Psoas muscle (tissue), 8 donors: ENCODE measurements at regions of chr18 and their contacts with region 1.

Region 1: DNA sequence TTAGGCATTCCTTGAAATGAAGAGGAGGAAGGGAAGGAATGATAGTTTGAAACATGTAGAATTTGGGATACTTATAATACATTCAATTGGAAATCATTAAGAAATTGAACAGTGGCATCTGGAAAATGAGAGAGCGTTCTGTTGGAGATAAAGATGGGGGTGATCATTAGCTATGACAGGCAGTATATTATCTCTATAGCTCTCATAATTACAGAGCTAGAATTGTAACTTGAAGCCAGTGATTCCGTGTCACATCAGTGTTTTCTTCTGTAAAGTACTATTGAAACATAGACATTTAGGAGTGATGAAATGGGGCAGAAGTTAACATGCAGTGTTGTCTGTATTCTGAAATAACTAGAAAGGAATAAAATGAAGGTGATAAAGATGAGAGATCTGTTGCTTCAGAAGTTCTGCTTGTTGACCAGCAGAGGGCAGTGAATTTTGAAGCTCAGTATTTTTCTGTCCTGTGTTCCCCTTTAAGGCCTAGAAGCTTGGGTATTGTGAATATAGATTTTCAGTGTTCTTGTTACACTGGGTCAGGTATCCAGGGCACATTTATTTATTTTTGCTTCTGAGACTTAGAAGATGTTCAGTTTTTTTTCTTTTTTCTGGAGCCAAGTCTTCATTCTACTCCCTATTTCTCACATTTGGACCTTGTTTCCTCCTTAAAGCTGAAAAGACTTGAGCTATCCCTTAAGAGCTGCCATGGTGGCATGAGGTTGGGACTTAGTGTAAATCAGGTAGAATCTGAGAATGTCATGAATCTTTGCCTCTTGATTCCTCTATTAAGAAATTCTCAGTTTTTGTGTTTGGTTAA is 157.4 kb downstream of the TAF4B start:
- DNase-seq: no peak
- ATAC-seq: peak in 2 of 4 donors; percentile 64 to 75
- H3K4me3 ChIP-seq: no peak overlapping the region
- H3K27ac ChIP-seq: no peak overlapping the region
- H3K4me1 ChIP-seq: no peaks in the 10 kb centered on the region
- H3K27me3 ChIP-seq: no peaks in the 10 kb centered on the region
- CTCF ChIP-seq: peak; percentile 83

Region 2: DNA sequence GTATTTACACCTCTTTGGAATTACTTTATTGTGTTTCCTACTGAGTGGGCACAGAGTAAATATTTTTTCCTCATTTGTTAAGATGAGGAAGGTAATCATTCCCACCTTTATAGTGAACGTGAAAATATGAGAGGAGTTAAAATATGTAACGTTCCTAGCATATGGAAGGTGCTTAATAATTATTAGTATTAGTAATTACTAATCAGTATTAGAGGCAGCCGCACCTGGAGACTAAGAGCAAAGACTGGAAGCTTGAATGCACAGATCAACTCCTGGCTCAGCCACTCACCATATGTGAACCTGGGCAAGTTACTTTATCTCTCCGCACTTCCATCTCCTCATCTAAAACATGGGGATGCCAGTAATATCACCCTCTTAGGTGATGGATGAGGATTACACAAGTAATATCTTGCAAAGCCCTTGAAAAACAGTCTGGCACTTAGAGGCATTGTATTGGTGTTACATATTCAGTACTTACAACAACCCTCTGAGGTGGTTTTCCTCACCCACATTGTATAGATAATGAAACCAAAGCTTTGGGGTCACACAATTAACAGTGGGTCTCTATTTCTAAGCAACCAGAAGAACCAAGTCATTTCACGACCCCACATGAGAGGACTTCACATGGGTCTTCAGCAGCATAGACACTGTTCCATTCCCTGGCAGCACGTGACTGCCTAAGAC is 265.0 kb after region 1 on chr18:
- intact Hi-C with region 1: loop called (anchors 5 kb)
- DNase-seq: no peak
- ATAC-seq: no peak
- H3K4me3 ChIP-seq: no peak overlapping the region
- H3K27ac ChIP-seq: no peak overlapping the region
- H3K4me1 ChIP-seq: no peaks in the 10 kb centered on the region
- H3K27me3 ChIP-seq: peaks cover 0 to 33% (median 0%) of the 10 kb centered on the region in 3 donors
- CTCF ChIP-seq: no peak

Region 3: DNA sequence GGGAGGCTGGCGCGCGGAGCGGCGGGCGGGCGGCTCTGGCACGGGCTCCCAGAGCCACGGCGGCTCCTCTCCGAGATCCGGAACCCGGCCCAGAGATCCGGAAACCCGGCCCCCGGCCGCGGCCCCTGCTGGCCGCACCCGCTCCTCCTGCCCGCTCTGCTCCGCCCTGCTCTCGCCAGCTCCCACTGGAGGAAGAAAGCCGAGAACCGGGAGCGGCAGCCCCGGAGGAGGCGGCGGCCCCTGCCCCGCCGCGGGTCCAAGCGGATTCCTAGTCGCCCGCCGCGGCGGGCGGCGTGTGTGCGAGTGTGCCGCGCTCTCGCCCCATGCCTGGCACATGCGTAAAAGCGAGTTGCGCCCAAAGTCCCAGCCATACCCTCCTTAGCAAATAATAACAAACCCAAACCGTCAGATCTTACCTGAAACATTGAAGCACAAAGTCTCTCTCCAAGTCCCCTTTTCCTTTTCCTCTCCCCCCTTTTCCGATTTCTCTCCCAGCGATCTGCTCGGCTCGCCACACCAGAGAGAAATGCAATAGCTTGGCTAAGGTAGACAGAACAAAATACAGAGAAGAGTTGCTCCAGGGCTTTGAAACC is 273.4 kb after region 1 on chr18:
- intact Hi-C with region 1: loop called in 1 of 2 experiments (anchors 5 kb)
- DNase-seq: peak; percentile 75 to 82
- ATAC-seq: peak; percentile 68 to 86 (median 80)
- H3K4me3 ChIP-seq: peak overlapping the region; percentile 76
- H3K27ac ChIP-seq: no peak overlapping the region
- H3K4me1 ChIP-seq: peaks cover 13% of the 10 kb centered on the region
- H3K27me3 ChIP-seq: peaks cover 0 to 80% (median 7%) of the 10 kb centered on the region in 3 donors
- CTCF ChIP-seq: peak; percentile 25

Region 4: DNA sequence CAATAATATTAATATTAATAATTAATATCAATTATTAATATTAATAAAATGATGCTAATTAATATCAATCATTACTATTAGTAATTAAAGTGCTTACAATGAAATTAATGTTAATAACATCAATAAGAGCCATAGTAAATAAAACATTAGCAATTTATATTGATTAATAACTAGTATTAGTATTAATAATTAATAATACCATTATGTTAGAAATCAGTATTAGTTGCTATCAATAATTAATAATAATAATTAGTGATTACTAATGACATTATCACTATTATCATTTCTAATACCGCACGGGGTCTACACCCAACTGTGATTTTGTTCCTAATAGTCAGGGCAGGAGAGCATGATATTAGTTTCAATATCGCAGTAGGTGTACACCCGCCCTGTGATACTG is 504.6 kb after region 1 on chr18:
- intact Hi-C with region 1: no loop called
- DNase-seq: no peak
- ATAC-seq: no peak
- H3K4me3 ChIP-seq: no peak overlapping the region
- H3K27ac ChIP-seq: no peak overlapping the region
- H3K4me1 ChIP-seq: no peaks in the 10 kb centered on the region
- H3K27me3 ChIP-seq: no peaks in the 10 kb centered on the region
- CTCF ChIP-seq: no peak